ENCODE measurements at regions of chr4 and their contacts with region 1.

Region 1: DNA sequence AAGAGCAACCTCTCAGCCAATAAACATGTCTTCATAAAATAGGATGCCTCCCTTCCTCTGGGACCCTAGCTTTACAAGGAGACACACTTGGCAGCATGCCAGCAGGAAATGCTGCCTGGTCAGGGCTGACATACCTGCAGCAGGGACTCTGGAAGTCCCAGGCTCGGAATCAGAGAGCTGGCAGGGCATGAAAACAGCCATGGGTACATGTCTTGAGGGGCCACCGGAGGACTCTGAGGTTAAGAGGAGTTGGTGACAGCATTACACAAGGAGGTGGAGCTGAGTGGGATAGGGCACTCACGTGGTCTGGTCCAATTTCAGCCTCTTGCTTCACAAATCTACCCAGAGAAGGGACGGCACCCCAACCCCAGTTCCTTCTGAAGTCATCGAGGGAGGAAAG is 15.7 kb downstream of the MSX1 start:
- DNase-seq: no peak
- H3K4me3 ChIP-seq: no peak overlapping the region
- H3K27ac ChIP-seq: no peak overlapping the region
- H3K4me1 ChIP-seq: peaks cover 0 to 22% (median 12%) of the 10 kb centered on the region in 4 experiments; a peak in 6 of 7 replicates
- H3K27me3 ChIP-seq: peaks cover 50 to 80% (median 67%) of the 10 kb centered on the region in 4 experiments
- CTCF ChIP-seq: no peak
- EP300 ChIP-seq: no peak
- POLR2A ChIP-seq: no peak
- RAD21 ChIP-seq: no peak

Region 2: GRCh38 chr4:4805887-4806286 is 69.3 kb before region 1 on chr4:
- CTCF ChIA-PET with region 1: no interaction called
- POLR2A ChIA-PET with region 1: no interaction called
- DNase-seq: no peak
- H3K4me3 ChIP-seq: no peak overlapping the region
- H3K27ac ChIP-seq: no peak overlapping the region
- H3K4me1 ChIP-seq: no peaks in the 10 kb centered on the region
- H3K27me3 ChIP-seq: peaks cover 0 to 4% (median under 1%) of the 10 kb centered on the region in 4 experiments; a peak in 3 of 7 replicates
- CTCF ChIP-seq: no peak
- EP300 ChIP-seq: no peak
- POLR2A ChIP-seq: no peak
- RAD21 ChIP-seq: no peak

Region 3: DNA sequence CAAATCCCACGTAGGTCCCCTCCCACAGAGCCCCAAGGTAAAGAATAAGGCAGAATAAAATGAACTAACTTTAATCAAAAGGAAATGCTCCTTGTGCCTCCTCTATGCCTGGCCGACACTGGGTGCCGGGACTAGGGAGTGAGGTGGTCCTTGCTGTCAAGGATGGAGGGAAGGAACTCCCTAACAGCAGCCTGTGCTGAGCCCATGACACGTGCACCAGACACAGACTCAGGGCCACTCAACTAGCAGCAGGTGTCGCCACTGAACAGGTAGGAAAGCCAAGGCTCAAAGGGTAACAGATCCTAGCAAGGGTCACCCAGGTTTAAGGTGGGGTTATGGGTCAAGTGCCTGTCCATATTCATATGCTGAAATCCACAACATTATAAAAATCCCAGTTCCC is 13.5 kb after region 1 on chr4:
- CTCF ChIA-PET with region 1: interaction called, 11 read pairs
- POLR2A ChIA-PET with region 1: no interaction called
- DNase-seq: no peak
- H3K4me3 ChIP-seq: no peak overlapping the region
- H3K27ac ChIP-seq: no peak overlapping the region
- H3K4me1 ChIP-seq: no peaks in the 10 kb centered on the region
- H3K27me3 ChIP-seq: peaks cover 0 to 3% (median 1%) of the 10 kb centered on the region in 4 experiments; a peak in 3 of 7 replicates
- CTCF ChIP-seq: peak; percentile 24 to 56 (median 48); a peak in 3 of 4 replicates
- EP300 ChIP-seq: no peak
- POLR2A ChIP-seq: no peak
- RAD21 ChIP-seq: peak; percentile 18 to 47; a peak in 2 of 4 replicates

Region 4: GRCh38 chr4:5037553-5038551 is 162.7 kb after region 1 on chr4:
- CTCF ChIA-PET with region 1: no interaction called
- POLR2A ChIA-PET with region 1: no interaction called
- DNase-seq: no peak
- H3K4me3 ChIP-seq: no peak overlapping the region
- H3K27ac ChIP-seq: no peak overlapping the region
- H3K4me1 ChIP-seq: no peaks in the 10 kb centered on the region
- H3K27me3 ChIP-seq: no peaks in the 10 kb centered on the region
- CTCF ChIP-seq: no peak
- EP300 ChIP-seq: no peak
- POLR2A ChIP-seq: no peak
- RAD21 ChIP-seq: no peak

Region 5: GRCh38 chr4:5212255-5213013 is 337.3 kb after region 1 on chr4:
- CTCF ChIA-PET with region 1: no interaction called
- POLR2A ChIA-PET with region 1: no interaction called
- DNase-seq: no peak
- H3K4me3 ChIP-seq: no peak overlapping the region
- H3K27ac ChIP-seq: no peak overlapping the region
- H3K4me1 ChIP-seq: peaks cover 0 to 2% (median 0%) of the 10 kb centered on the region in 4 experiments; a peak in 1 of 7 replicates
- H3K27me3 ChIP-seq: no peaks in the 10 kb centered on the region
- CTCF ChIP-seq: no peak
- EP300 ChIP-seq: no peak
- POLR2A ChIP-seq: no peak
- RAD21 ChIP-seq: no peak